GM23248 (cell line): ENCODE measurements at regions of chr19 and their contacts with region 1.

Region 1: GRCh38 chr19:55146078-55146704 is 2.8 kb downstream of the TNNT1 start:
- DNase-seq: peak; percentile 46
- H3K4me3 ChIP-seq: no peak overlapping the region
- H3K27ac ChIP-seq: no peak overlapping the region
- H3K4me1 ChIP-seq: no peaks in the 10 kb centered on the region
- H3K27me3 ChIP-seq: peaks cover 30% of the 10 kb centered on the region

Region 2: DNA sequence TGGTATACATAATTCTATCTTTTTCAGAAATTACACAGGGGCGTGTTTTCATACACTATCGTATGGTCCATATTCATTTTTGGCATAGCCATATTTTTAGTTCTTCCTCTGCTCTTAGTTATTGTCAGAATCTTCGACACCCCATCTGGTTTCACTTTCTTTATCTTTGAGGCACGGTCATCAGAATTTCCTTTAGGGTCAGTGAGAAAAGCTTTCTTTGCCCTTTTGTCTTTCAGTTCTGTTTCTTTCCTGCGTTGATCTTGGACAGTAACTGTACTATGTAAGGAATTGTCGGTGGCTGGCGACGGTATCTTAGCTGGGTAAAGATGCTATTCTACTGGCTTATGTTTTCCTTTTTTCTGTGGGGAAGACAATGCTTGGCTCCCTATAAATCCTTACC is 353.4 kb before region 1 on chr19:
- in situ Hi-C with region 1: no loop called
- DNase-seq: no peak
- H3K4me3 ChIP-seq: no peak overlapping the region
- H3K27ac ChIP-seq: no peak overlapping the region
- H3K4me1 ChIP-seq: no peaks in the 10 kb centered on the region
- H3K27me3 ChIP-seq: no peaks in the 10 kb centered on the region

Region 3: DNA sequence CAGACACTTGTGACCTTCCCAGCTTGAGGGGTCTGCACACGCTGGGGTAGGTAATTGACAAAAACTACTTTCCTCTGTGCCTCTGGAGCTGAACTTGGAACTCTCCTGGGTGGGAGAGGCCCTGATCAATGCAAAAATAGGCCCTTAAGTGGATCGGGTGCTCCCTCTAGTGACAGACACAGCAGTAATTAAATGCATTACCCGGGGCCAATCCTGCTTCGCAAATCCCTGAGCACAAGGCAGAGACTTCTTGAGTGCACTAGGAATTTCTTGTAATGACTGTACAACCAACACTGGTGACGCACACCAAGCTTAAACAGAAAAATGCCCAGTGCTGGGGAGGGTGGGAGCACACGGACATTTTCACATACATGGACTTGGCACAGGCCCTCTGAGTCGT is 272.0 kb after region 1 on chr19:
- in situ Hi-C with region 1: loop called (anchors 10 kb)
- DNase-seq: peak; percentile 95
- H3K4me3 ChIP-seq: no peak overlapping the region
- H3K27ac ChIP-seq: no peak overlapping the region
- H3K4me1 ChIP-seq: no peaks in the 10 kb centered on the region
- H3K27me3 ChIP-seq: 0 out of 2 replicates have a peak, but pooled peaks cover 5% of the 10 kb centered on the region

Region 4: GRCh38 chr19:55624109-55625003 is 478.2 kb after region 1 on chr19 and contains the start of gene ZNF784:
- in situ Hi-C with region 1: loop called (anchors 25 kb)
- DNase-seq: peak; percentile 99
- H3K4me3 ChIP-seq: peak within 1 kb of the TSS; percentile 80
- H3K27ac ChIP-seq: peak within 1 kb of the TSS; percentile 86
- H3K4me1 ChIP-seq: no peaks in the 10 kb centered on the region
- H3K27me3 ChIP-seq: no peaks in the 10 kb centered on the region
- total RNA-seq, gene ZNF784: 3.0 and 4.2 TPM in 2 replicates